WTC11 (cell line): ENCODE measurements at regions of chr6 and their contacts with region 1.

Region 1: GRCh38 chr6:168201383-168201782 is 118.2 kb downstream of the DACT2 start:
- DNase-seq: peak; percentile 57
- ATAC-seq: peak; percentile 91
- H3K4me3 Mint-ChIP-seq: no peak overlapping the region
- H3K27ac Mint-ChIP-seq: no peak overlapping the region
- H3K4me1 Mint-ChIP-seq: peaks cover 17% of the 10 kb centered on the region; the same call in 1 of the 2 replicates
- H3K27me3 Mint-ChIP-seq: peaks cover 6% of the 10 kb centered on the region
- CTCF ChIP-seq: 0 out of 2 replicates have a peak, but pooled peaks have one; percentile 15

Region 2: GRCh38 chr6:168232970-168233874 is 31.8 kb after region 1 on chr6:
- CTCF ChIA-PET with region 1: interaction called, 11 read pairs
- POLR2A ChIA-PET with region 1: no interaction called
- DNase-seq: no peak
- ATAC-seq: 0 out of 2 replicates have a peak, but pooled peaks have one; percentile 35
- H3K4me3 Mint-ChIP-seq: no peak overlapping the region
- H3K27ac Mint-ChIP-seq: no peak overlapping the region
- H3K4me1 Mint-ChIP-seq: peaks cover 22% of the 10 kb centered on the region
- H3K27me3 Mint-ChIP-seq: no peaks in the 10 kb centered on the region
- CTCF ChIP-seq: no peak

Region 3: GRCh38 chr6:168355716-168356449 is 154.5 kb after region 1 on chr6:
- CTCF ChIA-PET with region 1: interaction called, 20 read pairs
- POLR2A ChIA-PET with region 1: interaction called, 3 read pairs
- DNase-seq: peak; percentile 71
- ATAC-seq: peak; percentile 88
- H3K4me3 Mint-ChIP-seq: no peak overlapping the region
- H3K27ac Mint-ChIP-seq: no peak overlapping the region
- H3K4me1 Mint-ChIP-seq: no peaks in the 10 kb centered on the region
- H3K27me3 Mint-ChIP-seq: no peaks in the 10 kb centered on the region
- CTCF ChIP-seq: peak; percentile 55